ENCODE measurements at regions of chr2 and their contacts with region 1.

Region 1: GRCh38 chr2:7109533-7109885 is 192.3 kb downstream of the RNF144A start:
- DNase-seq: no peak
- CTCF ChIP-seq: no peak

Region 2: GRCh38 chr2:6412533-6413091 is 696.9 kb before region 1 on chr2:
- CTCF ChIA-PET with region 1: no interaction called
- POLR2A ChIA-PET with region 1: no interaction called
- DNase-seq: no peak
- CTCF ChIP-seq: no peak

Region 3: DNA sequence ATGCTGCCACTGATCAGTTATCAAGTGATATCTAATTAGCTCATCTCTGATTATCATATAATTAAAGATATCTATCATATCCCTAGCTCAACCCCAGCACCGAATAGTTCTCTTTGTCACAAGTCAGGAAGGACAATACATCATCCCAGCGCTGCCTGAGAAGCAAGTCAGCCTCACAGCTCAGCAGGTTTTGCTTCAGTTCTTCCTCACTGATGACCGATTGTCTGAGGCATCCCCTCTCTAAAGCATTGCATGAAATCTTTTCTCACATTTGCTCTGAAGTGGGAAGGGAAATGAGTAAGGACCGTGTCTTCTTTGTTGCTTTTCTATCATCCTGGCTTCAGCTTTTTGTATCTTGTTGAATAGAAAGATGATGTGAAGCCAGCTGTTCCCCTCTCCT is 491.7 kb before region 1 on chr2:
- CTCF ChIA-PET with region 1: no interaction called
- POLR2A ChIA-PET with region 1: no interaction called
- DNase-seq: no peak
- CTCF ChIP-seq: no peak

Region 4: GRCh38 chr2:6865346-6866274 is 243.9 kb before region 1 on chr2 and contains the start of gene CMPK2:
- CTCF ChIA-PET with region 1: no interaction called
- POLR2A ChIA-PET with region 1: no interaction called
- DNase-seq: peak; percentile 87
- CTCF ChIP-seq: no peak

Region 5: DNA sequence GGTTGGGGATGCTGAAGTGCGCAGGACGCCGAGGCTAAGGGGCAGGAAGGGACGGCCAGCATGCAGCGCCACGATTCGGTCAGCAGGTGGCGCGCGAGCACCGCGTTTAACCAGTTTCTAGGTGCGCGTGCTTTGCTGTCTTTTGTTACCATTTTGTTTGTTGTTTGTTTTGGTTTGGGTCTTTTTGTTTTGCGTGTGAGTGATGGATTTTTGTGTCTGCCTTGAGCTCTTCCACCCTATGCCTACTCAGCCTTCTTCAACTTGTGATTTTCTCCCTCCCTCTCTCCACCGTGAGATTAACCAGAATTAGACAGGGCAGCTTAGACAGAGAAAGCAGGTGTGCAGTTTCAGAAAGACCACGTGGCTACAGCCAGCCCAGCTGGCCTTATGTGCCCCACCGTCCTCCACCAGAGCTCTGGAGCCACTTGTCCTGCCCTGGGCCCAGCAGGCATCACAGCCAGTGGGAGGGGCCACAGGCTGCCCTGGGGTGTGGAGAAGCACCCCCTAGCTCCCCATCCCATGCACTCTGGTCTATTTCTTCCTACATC is 12.1 kb before region 1 on chr2:
- CTCF ChIA-PET with region 1: interaction called, 15 read pairs
- POLR2A ChIA-PET with region 1: no interaction called
- DNase-seq: peak; percentile 82
- CTCF ChIP-seq: peak; percentile 100

Region 6: GRCh38 chr2:7924023-7924762 is 814.7 kb after region 1 on chr2:
- CTCF ChIA-PET with region 1: no interaction called
- POLR2A ChIA-PET with region 1: no interaction called
- DNase-seq: no peak
- CTCF ChIP-seq: no peak